MCF 10A (cell line): ENCODE measurements at regions of chr10 and their contacts with region 1.

Region 1: GRCh38 chr10:58177362-58177947 is 90.2 kb downstream of the IPMK start:
- DNase-seq: peak; percentile 38
- H3K4me3 Mint-ChIP-seq: no peak overlapping the region
- H3K27ac Mint-ChIP-seq: no peak overlapping the region
- H3K4me1 Mint-ChIP-seq: peaks cover 20% of the 10 kb centered on the region
- H3K27me3 Mint-ChIP-seq: peaks cover 7% of the 10 kb centered on the region
- CTCF ChIP-seq: peak; percentile 53

Region 2: DNA sequence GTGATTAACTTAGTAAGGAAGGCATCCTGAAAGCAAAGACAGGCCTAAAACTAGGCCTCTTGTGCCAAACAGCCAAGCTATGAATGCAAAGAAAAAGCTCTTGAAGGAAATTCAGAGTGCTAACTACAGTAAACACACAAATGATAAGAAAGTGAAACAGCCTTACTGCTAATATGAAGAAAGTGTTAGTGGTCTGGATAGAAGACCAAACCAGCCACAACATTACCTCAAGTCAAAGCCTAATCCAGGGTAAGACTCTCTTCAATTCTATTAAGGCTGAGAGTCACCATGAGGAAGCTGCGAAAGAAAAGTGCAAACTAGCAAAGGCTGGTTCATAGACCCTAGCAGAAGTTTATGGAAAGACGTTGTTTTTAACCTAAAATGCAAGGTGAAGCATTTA is 24.2 kb after region 1 on chr10:
- CTCF ChIA-PET with region 1: interaction called, 20 read pairs
- POLR2A ChIA-PET with region 1: no interaction called
- intact Hi-C with region 1: no loop called
- DNase-seq: no peak
- H3K4me3 Mint-ChIP-seq: no peak overlapping the region
- H3K27ac Mint-ChIP-seq: no peak overlapping the region
- H3K4me1 Mint-ChIP-seq: no peaks in the 10 kb centered on the region
- H3K27me3 Mint-ChIP-seq: no peaks in the 10 kb centered on the region
- CTCF ChIP-seq: no peak

Region 3: DNA sequence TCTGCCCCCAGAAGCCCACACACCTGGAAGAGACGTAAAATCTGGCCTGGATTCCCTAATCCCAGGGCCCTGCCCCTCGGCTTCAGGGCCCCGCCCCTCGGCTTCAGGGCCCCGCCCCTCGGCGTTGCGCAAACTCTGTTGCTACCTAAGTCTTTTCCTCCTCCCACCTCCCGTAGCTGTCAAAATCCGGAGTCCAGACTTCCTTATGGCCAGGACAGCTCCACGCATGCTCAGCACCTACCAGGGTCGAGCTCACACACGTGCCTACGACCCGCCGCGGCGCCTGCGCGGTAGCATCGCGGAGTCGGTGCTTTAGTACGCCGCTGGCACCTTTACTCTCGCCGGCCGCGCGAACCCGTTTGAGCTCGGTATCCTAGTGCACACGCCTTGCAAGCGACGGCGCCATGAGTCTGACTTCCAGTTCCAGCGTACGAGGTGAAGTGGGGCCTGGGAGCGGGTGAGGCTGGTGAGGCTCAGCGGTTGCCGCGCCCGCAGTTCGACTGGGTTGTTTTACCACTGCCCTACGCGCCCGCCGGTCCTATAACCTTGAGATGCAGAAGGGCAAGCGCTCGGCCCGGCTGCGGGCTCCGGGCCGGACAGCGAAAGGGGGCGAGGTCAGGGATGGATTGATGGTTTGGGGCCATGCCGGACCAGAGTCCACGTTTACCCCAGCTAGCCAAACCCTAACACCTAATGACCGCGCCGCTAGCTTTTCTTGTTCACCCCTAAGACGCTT is 91.6 kb after region 1 on chr10 and contains the start of gene CISD1:
- CTCF ChIA-PET with region 1: interaction called, 5 read pairs
- POLR2A ChIA-PET with region 1: interaction called, 45 read pairs
- intact Hi-C with region 1: no loop called
- DNase-seq: peak; percentile 99
- H3K4me3 Mint-ChIP-seq: peak within 1 kb of the TSS; percentile 98
- H3K27ac Mint-ChIP-seq: peak within 1 kb of the TSS; percentile 96
- H3K4me1 Mint-ChIP-seq: peaks cover 8% of the 10 kb centered on the region
- H3K27me3 Mint-ChIP-seq: no peaks in the 10 kb centered on the region
- CTCF ChIP-seq: no peak
- total RNA-seq, gene CISD1: 51.8 and 58.0 TPM in 2 replicates

Region 4: DNA sequence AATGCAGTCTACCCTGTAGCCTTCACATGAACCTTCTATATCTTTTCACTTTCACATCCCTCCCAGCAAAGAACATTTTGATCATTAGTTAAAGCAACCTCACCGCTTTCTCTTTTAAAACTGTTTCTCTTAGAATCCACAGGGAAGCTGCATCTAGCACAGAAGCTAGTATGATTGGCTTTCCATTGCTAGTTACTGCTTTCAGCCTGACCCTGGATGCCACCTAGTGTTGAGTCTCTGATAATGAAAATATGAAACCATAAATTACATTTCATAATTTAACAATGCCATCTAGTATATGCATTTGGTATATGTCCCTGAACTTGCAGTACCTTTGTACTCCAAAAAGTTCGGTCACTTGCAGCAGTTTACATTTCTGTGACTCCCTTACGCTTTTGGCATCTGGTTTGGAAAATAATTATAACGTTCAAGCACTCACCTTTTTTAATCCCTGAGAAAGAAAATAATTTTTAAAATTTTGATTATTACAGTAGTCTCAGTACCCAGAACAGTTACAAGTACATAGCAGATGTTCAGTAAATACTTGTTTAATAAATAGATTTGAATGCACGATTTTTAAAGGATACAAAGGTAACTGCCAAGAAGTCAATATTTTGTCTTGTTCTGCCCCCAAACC is 114.2 kb after region 1 on chr10:
- CTCF ChIA-PET with region 1: interaction called, 198 read pairs
- POLR2A ChIA-PET with region 1: interaction called, 38 read pairs
- intact Hi-C with region 1: loop called (anchors 1 kb)
- DNase-seq: peak; percentile 61
- H3K4me3 Mint-ChIP-seq: no peak overlapping the region
- H3K27ac Mint-ChIP-seq: peak overlapping the region; percentile 2
- H3K4me1 Mint-ChIP-seq: peaks cover 6% of the 10 kb centered on the region
- H3K27me3 Mint-ChIP-seq: no peaks in the 10 kb centered on the region
- CTCF ChIP-seq: peak; percentile 57

Region 5: GRCh38 chr10:58305821-58306220 is 128.4 kb after region 1 on chr10:
- CTCF ChIA-PET with region 1: interaction called, 33 read pairs
- POLR2A ChIA-PET with region 1: no interaction called
- intact Hi-C with region 1: no loop called
- DNase-seq: no peak
- H3K4me3 Mint-ChIP-seq: no peak overlapping the region
- H3K27ac Mint-ChIP-seq: no peak overlapping the region
- H3K4me1 Mint-ChIP-seq: no peaks in the 10 kb centered on the region
- H3K27me3 Mint-ChIP-seq: peaks cover 83% of the 10 kb centered on the region
- CTCF ChIP-seq: no peak